ENCODE measurements at regions of chr16 and their contacts with region 1.

Region 1: DNA sequence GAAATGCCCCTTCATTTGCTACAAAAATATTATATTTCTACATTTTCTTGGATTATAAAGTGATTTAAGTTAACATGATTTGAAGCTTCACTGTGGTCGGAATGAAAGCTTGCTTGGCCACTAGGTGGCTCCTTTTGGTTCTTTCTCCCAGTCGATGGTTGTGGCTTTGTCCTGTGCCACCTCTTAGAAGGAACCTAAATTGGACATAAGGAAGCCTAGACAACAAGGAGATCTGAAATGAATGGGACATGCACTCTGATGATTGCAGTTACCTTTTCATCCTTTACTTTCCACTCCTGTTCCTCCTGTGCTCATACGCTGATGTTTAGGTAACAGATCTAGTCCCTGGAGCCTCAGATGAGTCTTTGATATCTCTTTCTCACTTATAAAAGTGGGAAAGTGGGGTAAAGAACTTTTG is 39.2 kb downstream of the FTO start:
- DNase-seq: peak; percentile 34
- H3K4me3 Mint-ChIP-seq: no peak overlapping the region
- H3K27ac Mint-ChIP-seq: no peak overlapping the region
- H3K4me1 Mint-ChIP-seq: peaks cover 23% of the 10 kb centered on the region
- H3K27me3 Mint-ChIP-seq: no peaks in the 10 kb centered on the region

Region 2: GRCh38 chr16:53703590-53704444 is 39.3 kb before region 1 on chr16 and contains the starts of genes FTO and RPGRIP1L:
- CTCF ChIA-PET with region 1: interaction called, 11 read pairs
- DNase-seq: peak; percentile 99
- H3K4me3 Mint-ChIP-seq: peak within 1 kb of the TSS; percentile 98
- H3K27ac Mint-ChIP-seq: peak within 1 kb of the TSS; percentile 93
- H3K4me1 Mint-ChIP-seq: peaks cover 31% of the 10 kb centered on the region
- H3K27me3 Mint-ChIP-seq: no peaks in the 10 kb centered on the region

Region 3: GRCh38 chr16:53730693-53731092 is 12.5 kb before region 1 on chr16:
- CTCF ChIA-PET with region 1: interaction called, 11 read pairs
- DNase-seq: no peak
- H3K4me3 Mint-ChIP-seq: no peak overlapping the region
- H3K27ac Mint-ChIP-seq: no peak overlapping the region
- H3K4me1 Mint-ChIP-seq: no peaks in the 10 kb centered on the region
- H3K27me3 Mint-ChIP-seq: no peaks in the 10 kb centered on the region

Region 4: DNA sequence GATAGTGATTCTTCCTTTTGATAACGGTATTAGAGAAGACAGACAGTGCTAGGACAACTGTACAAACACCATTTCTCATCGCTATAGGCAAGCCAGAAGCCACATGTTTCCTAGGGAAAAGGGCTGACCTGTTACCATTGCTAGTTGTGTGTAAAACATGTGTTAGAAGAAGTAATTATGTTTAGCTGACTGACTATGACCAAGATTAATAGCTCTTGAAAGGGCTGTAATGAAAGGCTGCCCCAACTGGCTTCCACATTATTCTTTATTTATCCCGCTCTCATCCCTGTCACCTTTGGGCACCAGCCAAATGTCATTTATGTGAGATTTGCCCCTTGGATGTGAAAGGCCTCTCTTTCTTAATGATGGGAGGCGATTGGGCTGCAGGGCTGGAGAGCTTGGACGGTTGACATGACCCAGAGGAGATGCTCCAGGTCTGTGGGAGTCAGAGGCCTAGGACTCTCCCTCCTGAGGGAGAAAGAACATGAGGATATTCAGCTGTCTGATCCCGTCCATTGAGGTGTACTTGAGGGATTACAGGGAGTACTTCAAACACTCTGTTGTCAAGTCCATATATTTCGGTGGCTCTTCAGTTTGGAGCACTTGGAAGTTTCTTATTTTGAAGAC is 11.9 kb after region 1 on chr16:
- CTCF ChIA-PET with region 1: interaction called, 12 read pairs
- DNase-seq: no peak
- H3K4me3 Mint-ChIP-seq: no peak overlapping the region
- H3K27ac Mint-ChIP-seq: no peak overlapping the region
- H3K4me1 Mint-ChIP-seq: no peaks in the 10 kb centered on the region
- H3K27me3 Mint-ChIP-seq: no peaks in the 10 kb centered on the region

Region 5: GRCh38 chr16:53809088-53809932 is 66.2 kb after region 1 on chr16:
- CTCF ChIA-PET with region 1: no interaction called
- DNase-seq: no peak
- H3K4me3 Mint-ChIP-seq: no peak overlapping the region
- H3K27ac Mint-ChIP-seq: no peak overlapping the region
- H3K4me1 Mint-ChIP-seq: peaks cover 3% of the 10 kb centered on the region
- H3K27me3 Mint-ChIP-seq: no peaks in the 10 kb centered on the region

Region 6: DNA sequence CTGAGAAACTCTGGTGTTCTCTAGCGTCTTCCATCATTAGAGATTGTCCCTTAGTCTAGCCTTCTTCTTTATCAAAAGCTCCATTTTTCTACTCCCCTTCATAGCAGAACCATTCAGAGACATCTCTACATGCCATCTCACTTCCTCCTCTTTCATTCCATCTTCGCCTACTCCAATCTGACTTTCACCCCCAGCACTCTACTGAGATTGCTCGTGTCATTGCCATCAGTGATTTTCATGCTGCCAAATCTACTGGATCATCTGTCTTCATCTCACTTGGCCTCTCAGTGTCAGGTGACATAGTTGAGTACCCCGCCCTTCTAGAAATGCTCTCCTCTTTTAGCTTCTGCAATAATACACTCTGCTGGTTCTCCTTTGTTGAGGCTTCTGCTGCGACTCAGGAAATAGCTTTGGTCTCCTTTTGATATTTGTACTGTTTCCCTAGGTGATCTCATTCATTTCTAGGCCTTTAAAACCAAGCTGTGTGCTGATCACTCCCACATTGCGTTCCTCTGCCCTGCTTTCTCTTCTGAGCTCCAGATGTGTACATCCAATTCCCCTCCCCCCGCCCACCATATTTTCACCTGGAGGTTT is 79.9 kb after region 1 on chr16:
- CTCF ChIA-PET with region 1: interaction called, 23 read pairs
- DNase-seq: peak; percentile 60
- H3K4me3 Mint-ChIP-seq: no peak overlapping the region
- H3K27ac Mint-ChIP-seq: no peak overlapping the region
- H3K4me1 Mint-ChIP-seq: peaks cover 17% of the 10 kb centered on the region
- H3K27me3 Mint-ChIP-seq: no peaks in the 10 kb centered on the region